Activated naive CD4-positive, alpha-beta T cell treated with anti-CD3 and anti-CD28 coated beads for 36 hours (primary cell): ENCODE measurements at regions of chr3 and their contacts with region 1.

Region 1: GRCh38 chr3:157865352-157866000 is 240.7 kb downstream of the SHOX2 start:
- DNase-seq: peak; percentile 55
- H3K4me3 Mint-ChIP-seq: no peak overlapping the region
- H3K27ac Mint-ChIP-seq: no peak overlapping the region
- H3K4me1 Mint-ChIP-seq: no peaks in the 10 kb centered on the region
- H3K27me3 Mint-ChIP-seq: no peaks in the 10 kb centered on the region

Region 2: GRCh38 chr3:158313338-158313927 is 448.0 kb after region 1 on chr3:
- CTCF ChIA-PET with region 1: interaction called, 3 read pairs
- intact Hi-C with region 1: loop called (anchors 2 kb)
- DNase-seq: no peak
- H3K4me3 Mint-ChIP-seq: no peak overlapping the region
- H3K27ac Mint-ChIP-seq: no peak overlapping the region
- H3K4me1 Mint-ChIP-seq: peaks cover 1% of the 10 kb centered on the region
- H3K27me3 Mint-ChIP-seq: no peaks in the 10 kb centered on the region

Region 3: GRCh38 chr3:158532099-158532734 is 666.7 kb after region 1 on chr3:
- CTCF ChIA-PET with region 1: no interaction called
- intact Hi-C with region 1: loop called (anchors 5 kb)
- DNase-seq: peak; percentile 18
- H3K4me3 Mint-ChIP-seq: no peak overlapping the region
- H3K27ac Mint-ChIP-seq: no peak overlapping the region
- H3K4me1 Mint-ChIP-seq: no peaks in the 10 kb centered on the region
- H3K27me3 Mint-ChIP-seq: no peaks in the 10 kb centered on the region